ENCODE measurements at regions of chr6 and their contacts with region 1.

Region 1: DNA sequence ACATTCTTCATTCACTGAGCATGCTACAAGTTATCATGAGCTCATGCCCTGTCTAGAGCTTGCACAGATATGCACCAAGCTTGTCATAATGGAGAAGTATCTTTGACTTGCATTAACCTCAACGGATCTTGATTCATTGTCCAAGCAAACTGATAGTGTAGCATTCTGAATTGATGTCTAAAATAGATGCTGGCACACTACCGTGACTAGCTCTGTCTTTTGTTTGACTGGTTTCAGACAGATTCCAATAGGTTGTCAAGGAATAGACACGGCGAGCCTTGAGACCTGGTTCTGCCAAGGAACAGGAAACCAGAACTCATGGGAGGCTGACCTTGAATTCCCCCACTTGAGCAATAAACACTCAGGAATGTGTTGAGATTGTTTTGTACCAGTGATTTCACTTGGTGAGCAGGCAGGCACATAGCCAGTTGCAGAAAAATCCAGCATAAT is 1153.1 kb upstream of the GJE1 start:
- DNase-seq: no peak
- ATAC-seq: no peak
- H3K4me3 ChIP-seq: no peak overlapping the region
- H3K27ac ChIP-seq: no peak overlapping the region
- H3K4me1 ChIP-seq: 0 out of 2 replicates have a peak, but pooled peaks cover 6% of the 10 kb centered on the region
- H3K27me3 ChIP-seq: no peaks in the 10 kb centered on the region
- CTCF ChIP-seq: no peak

Region 2: DNA sequence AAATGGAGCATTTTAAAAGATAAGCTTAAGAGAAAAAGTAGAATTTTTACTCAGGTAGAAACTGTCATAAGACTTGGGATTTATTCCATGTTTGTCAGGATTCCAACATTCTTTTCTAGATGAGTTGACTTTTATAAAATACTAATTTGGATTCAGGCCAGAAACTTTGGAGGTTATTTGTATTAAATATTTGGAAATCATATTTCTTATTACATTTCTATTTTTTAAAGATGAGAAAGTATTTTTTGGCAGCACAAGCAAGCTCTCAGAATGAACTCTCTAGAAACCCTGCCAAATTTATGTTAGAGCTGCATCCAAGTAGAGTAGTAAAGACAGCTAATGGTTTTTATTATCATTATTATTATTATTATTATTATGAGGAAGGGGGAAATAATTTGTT is 138.2 kb after region 1 on chr6:
- CTCF ChIA-PET with region 1: no interaction called
- POLR2A ChIA-PET with region 1: no interaction called
- intact Hi-C with region 1: no loop called
- DNase-seq: peak; percentile 49
- ATAC-seq: no peak
- H3K4me3 ChIP-seq: no peak overlapping the region
- H3K27ac ChIP-seq: no peak overlapping the region
- H3K4me1 ChIP-seq: peaks cover 4% of the 10 kb centered on the region; the same call in 1 of the 2 replicates
- H3K27me3 ChIP-seq: no peaks in the 10 kb centered on the region
- CTCF ChIP-seq: no peak

Region 3: GRCh38 chr6:141265756-141266623 is 286.3 kb after region 1 on chr6:
- CTCF ChIA-PET with region 1: no interaction called
- POLR2A ChIA-PET with region 1: no interaction called
- intact Hi-C with region 1: loop called (anchors 10 kb)
- DNase-seq: peak; percentile 52
- ATAC-seq: 0 out of 2 replicates have a peak, but pooled peaks have one; percentile 54
- H3K4me3 ChIP-seq: peak overlapping the region; percentile 66
- H3K27ac ChIP-seq: peak overlapping the region; percentile 39
- H3K4me1 ChIP-seq: peaks cover 28% of the 10 kb centered on the region
- H3K27me3 ChIP-seq: no peaks in the 10 kb centered on the region
- CTCF ChIP-seq: no peak

Measured in PC-3 (cell line).